GM12878 (cell line): ENCODE measurements at regions of chr7 and their contacts with region 1.

Region 1: GRCh38 chr7:131859147-131859821 is 302.9 kb upstream of the PODXL start:
- DNase-seq: peak; percentile 5
- ATAC-seq: peak; percentile 96
- H3K4me3 ChIP-seq: no peak overlapping the region
- H3K27ac ChIP-seq: no peak overlapping the region
- H3K4me1 ChIP-seq: no peaks in the 10 kb centered on the region
- H3K27me3 ChIP-seq: no peaks in the 10 kb centered on the region
- CTCF ChIP-seq: peak; percentile 74 to 89 (median 87)
- EP300 ChIP-seq: no peak
- POLR2A ChIP-seq: no peak
- RAD21 ChIP-seq: peak; percentile 78

Region 2: GRCh38 chr7:131769226-131769625 is 90.1 kb before region 1 on chr7:
- CTCF ChIA-PET with region 1: no interaction called
- POLR2A ChIA-PET with region 1: no interaction called
- RAD21 ChIA-PET with region 1: no interaction called
- SMC1A ChIA-PET with region 1: no interaction called
- in situ Hi-C with region 1: no loop called
- intact Hi-C with region 1: no loop called
- DNase-seq: no peak
- ATAC-seq: no peak
- H3K4me3 ChIP-seq: no peak overlapping the region
- H3K27ac ChIP-seq: no peak overlapping the region
- H3K4me1 ChIP-seq: no peaks in the 10 kb centered on the region
- H3K27me3 ChIP-seq: no peaks in the 10 kb centered on the region
- CTCF ChIP-seq: no peak
- EP300 ChIP-seq: no peak
- POLR2A ChIP-seq: no peak
- RAD21 ChIP-seq: no peak

Region 3: GRCh38 chr7:131869169-131869844 is 10.0 kb after region 1 on chr7:
- CTCF ChIA-PET with region 1: interaction called, 13 read pairs
- POLR2A ChIA-PET with region 1: no interaction called
- RAD21 ChIA-PET with region 1: no interaction called
- SMC1A ChIA-PET with region 1: no interaction called
- in situ Hi-C with region 1: no loop called
- intact Hi-C with region 1: no loop called
- DNase-seq: no peak
- ATAC-seq: no peak
- H3K4me3 ChIP-seq: no peak overlapping the region
- H3K27ac ChIP-seq: no peak overlapping the region
- H3K4me1 ChIP-seq: no peaks in the 10 kb centered on the region
- H3K27me3 ChIP-seq: no peaks in the 10 kb centered on the region; a peak in 1 of 4 replicates
- CTCF ChIP-seq: no peak
- EP300 ChIP-seq: no peak
- POLR2A ChIP-seq: no peak
- RAD21 ChIP-seq: no peak

Region 4: DNA sequence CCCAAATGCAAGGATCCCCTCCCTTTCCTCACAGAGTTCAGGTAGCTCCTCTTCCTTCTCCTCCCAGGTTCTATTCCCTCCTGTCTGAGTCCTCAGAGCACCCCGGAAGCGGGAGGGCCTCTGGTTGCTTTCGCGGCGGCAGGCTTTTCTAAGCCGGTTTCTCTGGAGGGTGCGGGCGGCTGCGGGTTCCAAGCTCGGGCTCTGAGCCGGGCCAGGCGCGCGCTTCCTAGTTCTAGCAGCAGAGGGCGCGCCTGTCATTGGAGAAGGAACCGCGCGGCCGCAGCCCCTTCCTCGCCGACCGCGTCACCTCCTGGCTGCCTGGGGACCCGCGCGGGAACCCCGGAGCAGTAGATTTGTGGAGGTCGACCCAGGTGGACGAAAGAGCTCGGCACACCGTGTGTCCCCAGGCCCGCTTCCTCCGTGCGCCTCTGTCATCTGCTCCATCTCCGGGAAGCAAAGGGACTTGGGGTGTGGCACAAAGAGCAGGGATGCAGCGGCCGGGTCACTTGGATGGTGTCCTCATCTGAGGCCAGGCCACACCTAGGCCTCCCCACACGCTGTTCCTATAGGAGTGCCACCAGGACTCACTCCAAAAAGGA is 86.1 kb after region 1 on chr7:
- CTCF ChIA-PET with region 1: interaction called, 9 read pairs
- POLR2A ChIA-PET with region 1: no interaction called
- RAD21 ChIA-PET with region 1: interaction called, 4 read pairs
- SMC1A ChIA-PET with region 1: interaction called, 8 read pairs
- in situ Hi-C with region 1: no loop called
- intact Hi-C with region 1: loop called (anchors 1 kb)
- DNase-seq: no peak
- ATAC-seq: peak; percentile 91
- H3K4me3 ChIP-seq: no peak overlapping the region
- H3K27ac ChIP-seq: no peak overlapping the region
- H3K4me1 ChIP-seq: no peaks in the 10 kb centered on the region; the same call in 1 of the 2 replicates
- H3K27me3 ChIP-seq: peaks cover 1 to 3% of the 10 kb centered on the region in 2 experiments; a peak in 1 of 4 replicates
- CTCF ChIP-seq: peak; percentile 64 to 76 (median 67)
- EP300 ChIP-seq: no peak
- POLR2A ChIP-seq: no peak
- RAD21 ChIP-seq: peak; percentile 76

Region 5: DNA sequence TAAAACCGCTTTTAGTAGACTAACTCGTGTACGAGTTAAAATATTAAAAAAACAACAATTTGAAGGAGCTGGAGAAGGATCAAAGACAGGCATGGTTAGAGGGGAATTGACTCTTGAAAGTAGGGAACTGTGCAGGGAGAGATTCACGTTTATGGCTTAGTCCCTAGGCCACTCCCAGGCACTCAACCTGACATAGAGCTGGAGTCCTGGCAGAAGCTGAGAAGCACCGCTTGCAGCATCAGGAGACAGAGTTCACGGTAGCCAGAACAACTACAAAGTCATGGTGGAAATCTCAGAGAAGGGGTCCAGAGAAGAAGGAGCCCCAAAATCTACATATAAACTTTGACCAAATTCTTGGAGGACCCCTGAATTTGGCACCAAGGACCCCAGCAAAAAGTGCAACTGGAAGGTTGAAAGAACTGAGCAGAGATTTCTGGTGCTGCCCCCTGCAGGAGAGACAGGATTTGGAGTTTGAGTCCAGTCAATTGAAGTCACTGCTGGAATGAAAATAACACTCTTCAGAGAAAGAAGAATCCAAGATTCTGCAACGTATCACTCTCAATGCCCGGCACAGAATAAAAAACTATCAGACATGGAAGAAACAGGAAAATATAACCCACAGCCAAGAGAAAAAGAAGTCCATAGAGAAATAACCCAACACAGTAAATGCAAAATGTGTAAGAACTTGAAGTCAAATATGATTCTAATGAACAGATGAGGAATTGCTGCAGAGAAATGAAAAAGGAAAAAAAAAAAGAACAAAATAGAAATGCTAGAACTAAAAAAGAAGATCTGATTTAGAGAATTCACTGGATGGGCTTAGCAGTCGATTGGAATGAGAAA is 190.4 kb after region 1 on chr7:
- CTCF ChIA-PET with region 1: interaction called, 17 read pairs
- POLR2A ChIA-PET with region 1: no interaction called
- RAD21 ChIA-PET with region 1: interaction called, 4 read pairs
- SMC1A ChIA-PET with region 1: interaction called, 3 read pairs
- in situ Hi-C with region 1: no loop called
- intact Hi-C with region 1: loop called (anchors 1 kb)
- DNase-seq: no peak
- ATAC-seq: peak; percentile 42; the same call in 1 of the 3 replicates
- H3K4me3 ChIP-seq: no peak overlapping the region
- H3K27ac ChIP-seq: no peak overlapping the region
- H3K4me1 ChIP-seq: no peaks in the 10 kb centered on the region
- H3K27me3 ChIP-seq: no peaks in the 10 kb centered on the region; a peak in 1 of 4 replicates
- CTCF ChIP-seq: peak; percentile 56 to 69 (median 67)
- EP300 ChIP-seq: no peak
- POLR2A ChIP-seq: no peak
- RAD21 ChIP-seq: peak; percentile 43